Activated CD4-positive, alpha-beta T cell treated with anti-CD3 and anti-CD28 coated beads, Interleukin-2, amount 10 ng/mL, durations not matched to agents 7 days and 5 days (primary cell): ENCODE measurements at regions of chr7 and their contacts with region 1.

Region 1: DNA sequence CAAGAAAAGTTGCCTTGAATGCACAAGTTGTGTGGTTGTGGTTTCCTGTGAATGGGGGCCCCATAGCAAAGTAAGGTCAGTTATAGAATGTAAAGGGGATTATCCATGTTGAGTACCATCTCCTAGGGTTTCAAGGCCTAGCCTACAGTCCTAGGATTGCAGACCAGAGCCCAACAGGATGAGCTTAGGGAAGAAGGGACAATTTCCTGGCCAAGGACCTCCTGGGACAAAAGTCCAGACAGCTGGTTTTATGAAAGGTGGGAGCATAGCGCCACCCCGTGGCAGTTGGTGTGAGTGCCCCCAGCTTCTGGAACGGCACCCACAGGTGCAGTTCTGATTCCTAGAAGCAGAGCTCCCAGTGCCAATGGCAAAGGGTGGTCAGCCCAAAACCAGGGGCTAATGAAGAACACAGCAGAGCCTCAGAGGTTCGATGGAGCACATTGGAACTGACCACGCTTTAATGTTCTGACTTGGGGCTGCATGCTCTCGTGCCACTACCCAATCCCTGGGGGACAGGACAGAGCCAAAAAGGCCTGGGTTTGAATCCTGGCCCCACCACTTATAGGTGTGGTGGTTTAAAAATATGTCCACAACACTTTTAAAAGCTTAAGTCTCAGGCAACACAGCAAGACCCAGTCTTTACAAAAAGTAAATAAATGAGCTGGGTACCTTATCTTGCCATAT is 25.8 kb upstream of the TMEM120A start:
- DNase-seq: peak; percentile 75
- H3K4me3 Mint-ChIP-seq: no peak overlapping the region
- H3K27ac Mint-ChIP-seq: no peak overlapping the region
- H3K4me1 Mint-ChIP-seq: peaks cover 25% of the 10 kb centered on the region
- H3K27me3 Mint-ChIP-seq: no peaks in the 10 kb centered on the region

Region 2: GRCh38 chr7:75866489-75867389 is 153.4 kb before region 1 on chr7:
- CTCF ChIA-PET with region 1: interaction called, 32 read pairs
- POLR2A ChIA-PET with region 1: no interaction called
- DNase-seq: peak; percentile 55
- H3K4me3 Mint-ChIP-seq: no peak overlapping the region
- H3K27ac Mint-ChIP-seq: no peak overlapping the region
- H3K4me1 Mint-ChIP-seq: peaks cover 6% of the 10 kb centered on the region
- H3K27me3 Mint-ChIP-seq: peaks cover 9% of the 10 kb centered on the region

Region 3: DNA sequence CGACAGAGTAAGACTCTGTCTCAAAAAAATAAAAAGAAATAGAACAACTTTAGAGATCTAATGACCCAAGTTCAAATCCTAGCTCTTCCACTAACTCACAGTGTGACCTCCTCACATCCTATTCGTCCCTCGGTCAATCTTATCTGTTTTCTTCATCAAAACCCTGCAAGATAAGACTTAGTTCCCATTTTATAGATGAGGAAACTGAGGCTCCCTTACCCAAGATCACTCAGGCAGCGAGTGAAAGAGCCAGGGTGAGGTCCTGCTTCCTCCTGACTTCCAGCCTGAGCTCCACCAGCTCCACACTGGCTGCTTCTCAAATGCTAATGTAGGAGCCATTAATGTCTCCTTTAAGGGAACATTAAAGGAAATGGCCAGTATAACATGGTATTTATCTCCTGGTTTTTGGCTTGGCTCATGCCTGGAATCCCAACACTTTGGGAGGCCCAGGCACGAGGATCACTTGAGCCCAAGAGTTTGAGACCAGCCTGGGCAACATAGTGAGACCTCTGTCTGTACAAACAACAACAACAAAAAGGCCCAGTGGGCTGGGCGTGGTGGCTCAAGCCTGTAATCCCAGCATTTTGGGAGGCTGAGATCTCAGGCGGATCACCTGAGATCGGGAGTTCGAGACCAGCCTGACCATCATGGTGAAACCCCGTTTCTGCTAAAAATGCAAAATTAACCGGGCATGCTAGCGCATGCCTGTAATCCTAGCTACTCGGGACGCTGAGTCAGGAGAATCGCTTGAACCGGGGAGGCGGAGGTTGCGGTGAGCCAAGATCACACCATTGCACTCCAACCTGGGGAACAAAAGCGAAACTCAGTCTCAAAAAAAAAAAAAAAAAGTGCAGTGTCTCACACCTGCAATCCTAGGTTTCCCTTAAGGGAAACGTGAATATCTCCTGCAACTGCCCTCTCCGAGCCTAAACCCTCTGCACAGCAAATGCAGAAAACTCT is 144.8 kb before region 1 on chr7:
- CTCF ChIA-PET with region 1: interaction called, 14 read pairs
- POLR2A ChIA-PET with region 1: no interaction called
- DNase-seq: no peak
- H3K4me3 Mint-ChIP-seq: no peak overlapping the region
- H3K27ac Mint-ChIP-seq: no peak overlapping the region
- H3K4me1 Mint-ChIP-seq: peaks cover 22% of the 10 kb centered on the region
- H3K27me3 Mint-ChIP-seq: no peaks in the 10 kb centered on the region

Region 4: DNA sequence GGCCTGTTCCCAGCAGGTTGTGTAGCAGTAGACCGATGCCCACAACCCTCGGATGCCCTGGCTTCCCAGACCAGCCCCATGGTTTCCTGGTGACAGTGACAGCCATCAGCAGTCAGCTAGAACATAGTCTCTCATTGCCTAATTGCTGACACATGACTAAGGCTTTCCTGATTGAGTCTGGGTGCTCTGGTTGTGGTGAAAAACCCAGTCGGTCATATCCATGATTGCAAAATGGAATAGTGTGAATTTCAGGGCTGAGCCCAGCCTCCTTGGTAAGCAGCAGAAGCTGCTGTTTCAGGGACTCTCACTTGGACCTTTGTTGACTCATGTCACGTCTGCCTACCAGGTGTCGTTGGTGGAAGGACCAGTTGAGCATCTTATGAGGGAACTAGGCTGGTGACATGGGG is 68.7 kb before region 1 on chr7:
- CTCF ChIA-PET with region 1: no interaction called
- POLR2A ChIA-PET with region 1: no interaction called
- DNase-seq: no peak
- H3K4me3 Mint-ChIP-seq: no peak overlapping the region
- H3K27ac Mint-ChIP-seq: no peak overlapping the region
- H3K4me1 Mint-ChIP-seq: no peaks in the 10 kb centered on the region
- H3K27me3 Mint-ChIP-seq: no peaks in the 10 kb centered on the region

Region 5: DNA sequence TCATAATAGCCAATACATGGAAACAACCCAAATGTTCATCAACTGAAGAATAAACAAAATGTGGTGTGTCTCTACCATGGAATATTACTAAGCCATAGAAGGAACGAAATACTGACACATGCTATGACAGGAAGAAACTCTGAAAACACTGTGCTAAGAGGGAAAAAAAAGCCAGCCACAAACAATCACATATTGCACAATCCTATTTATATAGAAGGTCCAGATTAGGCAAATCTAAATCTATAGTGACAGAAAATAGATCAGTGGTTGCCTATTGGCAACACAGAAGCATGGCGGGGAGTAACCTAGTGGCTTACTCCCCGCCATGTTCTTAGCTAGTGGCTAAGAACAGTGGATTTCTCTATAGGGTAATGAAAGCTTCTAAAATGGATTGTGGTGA is 75.7 kb after region 1 on chr7:
- CTCF ChIA-PET with region 1: no interaction called
- POLR2A ChIA-PET with region 1: no interaction called
- DNase-seq: no peak
- H3K4me3 Mint-ChIP-seq: no peak overlapping the region
- H3K27ac Mint-ChIP-seq: no peak overlapping the region
- H3K4me1 Mint-ChIP-seq: no peaks in the 10 kb centered on the region
- H3K27me3 Mint-ChIP-seq: peaks cover 2% of the 10 kb centered on the region